CD8-positive, alpha-beta memory T cell (primary cell): ENCODE measurements at regions of chr12 and their contacts with region 1.

Region 1: GRCh38 chr12:71685914-71686665 is at the start of gene TMEM19:
- DNase-seq: peak; percentile 74 to 90 (median 85)
- H3K4me3 ChIP-seq: peak within 1 kb of the TSS; percentile 87
- H3K4me3 Mint-ChIP-seq: peak within 1 kb of the TSS; percentile 90 to 96 (median 93)
- H3K27ac ChIP-seq: peak within 1 kb of the TSS; percentile 77
- H3K27ac Mint-ChIP-seq: peak within 1 kb of the TSS; percentile 58 to 97 (median 94)
- H3K4me1 ChIP-seq: peaks cover 24% of the 10 kb centered on the region
- H3K4me1 Mint-ChIP-seq: peaks cover 20 to 48% (median 37%) of the 10 kb centered on the region in 3 donors
- H3K27me3 ChIP-seq: no peaks in the 10 kb centered on the region
- H3K27me3 Mint-ChIP-seq: peaks cover 0 to 2% of the 10 kb centered on the region in 2 donors
- total RNA-seq, gene TMEM19: 18.6 to 21.4 TPM

Region 2: GRCh38 chr12:71663561-71664294 is 22.4 kb before region 1 on chr12 and contains the start of gene ZFC3H1:
- CTCF ChIA-PET with region 1: interaction called, 34 read pairs
- POLR2A ChIA-PET with region 1: interaction called, 74 read pairs
- DNase-seq: peak; percentile 85 to 96 (median 95)
- H3K4me3 ChIP-seq: peak within 1 kb of the TSS; percentile 90
- H3K4me3 Mint-ChIP-seq: peak within 1 kb of the TSS; percentile 94 to 100 (median 99)
- H3K27ac ChIP-seq: peak within 1 kb of the TSS; percentile 99
- H3K27ac Mint-ChIP-seq: peak within 1 kb of the TSS; percentile 97 to 100 (median 100)
- H3K4me1 ChIP-seq: peaks cover 33% of the 10 kb centered on the region
- H3K4me1 Mint-ChIP-seq: peaks cover 49 to 63% (median 59%) of the 10 kb centered on the region in 3 donors
- H3K27me3 ChIP-seq: no peaks in the 10 kb centered on the region
- H3K27me3 Mint-ChIP-seq: peaks cover 0 to 3% of the 10 kb centered on the region in 2 donors
- total RNA-seq, gene ZFC3H1: 37.5 to 42.6 TPM

Region 3: DNA sequence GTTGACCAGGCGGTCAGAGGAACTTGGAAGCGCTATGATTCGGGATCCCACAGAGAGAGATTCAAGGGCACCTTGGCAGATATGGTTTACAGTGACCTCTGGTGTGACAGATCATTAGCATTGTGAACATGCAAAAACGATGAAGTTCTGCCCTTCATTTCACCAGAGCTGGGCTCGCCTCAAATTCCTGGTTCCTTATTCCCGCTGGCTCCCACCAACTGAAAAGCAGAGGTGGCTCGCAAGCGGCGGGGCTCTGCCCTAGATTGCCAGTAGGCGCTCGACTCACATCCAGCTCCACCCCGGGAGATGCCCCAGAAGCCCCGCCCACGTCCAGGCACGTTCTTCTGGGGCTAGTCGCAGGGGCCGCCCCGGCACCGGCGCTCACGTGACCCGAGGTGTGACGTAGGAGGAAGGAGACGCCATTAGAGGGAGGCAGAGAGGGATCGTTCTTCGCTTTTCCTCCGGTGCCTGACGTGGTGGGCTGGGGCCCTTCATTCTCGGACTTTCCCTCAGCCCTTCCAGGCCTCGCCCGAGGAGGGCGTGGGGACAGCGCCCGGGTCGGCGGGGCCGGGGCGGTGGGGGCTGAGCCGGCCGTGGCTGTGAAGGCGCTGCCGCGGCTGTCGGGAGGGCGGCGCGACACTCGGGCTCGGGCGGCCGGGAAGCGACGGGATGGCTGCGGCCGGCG is 68.5 kb after region 1 on chr12 and contains the start of gene RAB21:
- CTCF ChIA-PET with region 1: interaction called, 3 read pairs
- POLR2A ChIA-PET with region 1: interaction called, 13 read pairs
- DNase-seq: peak; percentile 96 to 99 (median 99)
- H3K4me3 ChIP-seq: peak within 1 kb of the TSS; percentile 87
- H3K4me3 Mint-ChIP-seq: peak within 1 kb of the TSS; percentile 93 to 99 (median 94)
- H3K27ac ChIP-seq: peak within 1 kb of the TSS; percentile 91
- H3K27ac Mint-ChIP-seq: peak within 1 kb of the TSS; percentile 96 to 99 (median 99)
- H3K4me1 ChIP-seq: peaks cover 22% of the 10 kb centered on the region
- H3K4me1 Mint-ChIP-seq: peaks cover 38 to 51% (median 48%) of the 10 kb centered on the region in 3 donors
- H3K27me3 ChIP-seq: no peaks in the 10 kb centered on the region
- H3K27me3 Mint-ChIP-seq: peaks cover 12 to 16% of the 10 kb centered on the region in 2 donors
- total RNA-seq, gene RAB21: 100 to 106 TPM

Region 4: DNA sequence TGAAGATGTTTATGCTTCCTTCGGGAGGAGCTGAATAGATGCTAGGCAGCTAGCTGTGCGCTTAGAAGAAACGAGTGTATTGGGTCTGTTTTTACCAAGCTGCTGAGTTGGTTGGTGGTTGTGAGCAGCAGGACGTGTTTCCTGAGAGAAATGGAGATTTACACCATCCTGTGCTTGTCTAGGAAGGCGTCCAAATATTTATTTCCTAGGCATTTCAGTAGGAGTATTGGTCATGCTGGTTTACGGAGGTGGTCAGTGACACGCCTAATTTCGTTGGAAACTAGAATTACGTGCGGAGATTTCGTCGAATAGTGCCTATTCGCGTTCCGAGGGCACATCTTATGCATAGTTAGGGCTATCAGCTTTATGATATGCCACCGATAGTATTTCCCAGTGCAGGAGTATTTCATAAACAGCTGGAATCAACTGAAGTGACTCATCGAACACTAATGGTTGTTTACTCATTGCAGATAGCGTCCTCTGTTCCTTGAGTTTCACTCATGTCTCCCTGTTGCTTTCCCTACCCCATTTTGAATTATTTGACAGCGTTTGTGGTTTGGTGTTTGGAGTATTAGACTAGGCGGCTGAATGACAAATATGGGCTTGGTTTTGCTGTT is 154.2 kb after region 1 on chr12:
- CTCF ChIA-PET with region 1: interaction called, 5 read pairs
- POLR2A ChIA-PET with region 1: interaction called, 10 read pairs
- DNase-seq: no peak
- H3K4me3 ChIP-seq: peak overlapping the region; percentile 78
- H3K4me3 Mint-ChIP-seq: peak overlapping the region; percentile 89 to 93 (median 92)
- H3K27ac ChIP-seq: peak overlapping the region; percentile 97
- H3K27ac Mint-ChIP-seq: peak overlapping the region; percentile 92 to 100 (median 98)
- H3K4me1 ChIP-seq: peaks cover 48% of the 10 kb centered on the region
- H3K4me1 Mint-ChIP-seq: peaks cover 39 to 48% (median 46%) of the 10 kb centered on the region in 3 donors
- H3K27me3 ChIP-seq: no peaks in the 10 kb centered on the region
- H3K27me3 Mint-ChIP-seq: peaks cover 2 to 5% of the 10 kb centered on the region in 2 donors